ENCODE measurements at regions of chr18 and their contacts with region 1.

Region 1: DNA sequence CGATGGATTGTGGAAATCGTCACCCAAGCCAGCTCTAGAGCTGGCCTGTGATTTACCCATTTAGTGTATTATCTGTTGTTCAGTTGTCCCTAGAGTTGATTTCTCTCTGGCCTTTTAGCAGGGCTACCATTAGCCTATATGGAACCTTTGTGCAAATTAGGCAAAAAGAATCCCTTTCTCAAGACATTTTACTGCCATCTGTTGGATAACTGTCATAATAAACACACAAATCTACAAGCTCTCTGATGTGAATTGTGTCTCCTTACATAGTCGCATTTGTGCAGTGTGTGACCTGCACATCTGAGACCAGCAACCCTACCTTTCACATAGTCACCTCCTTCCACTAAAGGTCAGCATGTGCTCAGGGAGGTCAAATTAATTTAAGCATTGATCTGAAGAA is 34.0 kb downstream of the LOXHD1 start:
- DNase-seq: no peak
- ATAC-seq: no peak
- H3K4me3 ChIP-seq: no peak overlapping the region
- H3K27ac ChIP-seq: no peak overlapping the region
- H3K4me1 ChIP-seq: peaks cover 0 to 12% (median 6%) of the 10 kb centered on the region in 12 donors
- H3K27me3 ChIP-seq: peaks cover 0 to 13% (median 0%) of the 10 kb centered on the region in 9 donors
- CTCF ChIP-seq: peak in 5 of 12 donors; percentile 5 to 33 (median 22)
- POLR2A ChIP-seq: no peak

Region 2: DNA sequence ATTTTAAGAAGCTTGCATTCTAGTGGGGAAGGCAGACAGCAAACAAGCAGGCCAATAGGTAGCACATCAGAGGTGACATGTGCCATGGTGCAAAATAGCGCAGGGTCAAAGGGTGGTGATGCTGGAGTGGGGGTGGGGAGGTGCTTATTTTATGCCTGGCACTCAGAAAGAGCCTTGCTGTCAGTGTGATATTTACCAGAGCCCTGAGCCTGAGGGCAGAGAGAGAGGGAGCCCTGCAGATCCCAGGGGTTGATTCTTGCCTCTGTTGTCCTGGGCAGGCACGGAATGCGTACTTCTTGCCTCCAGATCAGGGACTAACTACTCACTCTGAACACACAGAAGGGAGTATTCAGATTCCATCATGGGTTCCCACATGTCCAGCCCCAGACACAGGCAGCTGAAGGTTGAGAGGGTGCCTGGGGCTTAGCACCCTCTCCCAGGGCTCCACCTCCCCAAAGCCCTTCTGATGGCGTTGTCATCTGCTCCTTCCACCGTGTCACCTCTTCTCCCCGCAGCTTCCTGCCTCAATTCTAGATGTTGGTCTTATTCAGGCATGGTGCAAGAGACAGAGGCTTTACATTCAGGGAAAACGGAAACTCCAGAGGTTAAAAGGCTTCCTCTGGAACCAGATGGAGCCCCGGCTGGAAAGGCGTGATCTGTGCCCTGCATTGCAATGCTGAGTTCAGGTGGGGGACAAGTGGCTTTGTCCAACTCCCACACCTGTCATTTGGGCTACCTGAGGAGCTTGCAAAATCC is 266.5 kb before region 1 on chr18:
- intact Hi-C with region 1: no loop called
- DNase-seq: peak in 4 of 5 donors; percentile 42 to 65 (median 54)
- ATAC-seq: peak; percentile 81 to 94 (median 88)
- H3K4me3 ChIP-seq: no peak overlapping the region
- H3K27ac ChIP-seq: peak overlapping the region in 8 of 12 donors; percentile 12 to 76 (median 53)
- H3K4me1 ChIP-seq: peaks cover 0 to 13% (median 7%) of the 10 kb centered on the region in 12 donors
- H3K27me3 ChIP-seq: no peaks in the 10 kb centered on the region
- CTCF ChIP-seq: no peak
- POLR2A ChIP-seq: no peak

Region 3: DNA sequence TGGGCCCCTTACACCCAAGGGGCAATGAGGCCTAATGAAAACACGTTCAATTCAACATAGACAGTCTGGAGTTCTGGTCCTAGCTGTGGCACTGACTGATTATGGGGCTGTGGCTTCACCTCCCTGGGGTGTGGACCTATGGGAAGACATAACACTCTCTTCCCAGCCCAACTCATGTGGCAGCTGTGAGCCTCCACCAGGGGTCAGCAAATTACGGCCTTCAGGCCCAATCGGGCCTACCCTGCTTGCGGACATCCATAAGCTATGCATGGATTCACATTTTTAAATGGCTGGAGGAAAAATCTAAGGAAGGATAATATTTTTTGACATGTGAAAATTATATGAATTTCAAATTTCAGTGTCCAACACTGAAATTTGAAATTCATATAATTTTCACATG is 67.3 kb before region 1 on chr18:
- intact Hi-C with region 1: loop called in 3 of 10 experiments (anchors 5 to 10 kb)
- DNase-seq: peak in 3 of 5 donors; percentile 27 to 55 (median 50)
- ATAC-seq: peak in 3 of 4 donors; percentile 73 to 86 (median 76)
- H3K4me3 ChIP-seq: no peak overlapping the region
- H3K27ac ChIP-seq: no peak overlapping the region
- H3K4me1 ChIP-seq: no peaks in the 10 kb centered on the region
- H3K27me3 ChIP-seq: no peaks in the 10 kb centered on the region
- CTCF ChIP-seq: peak; percentile 40 to 67 (median 58)
- POLR2A ChIP-seq: no peak

Region 4: GRCh38 chr18:46677611-46678010 is 54.6 kb after region 1 on chr18:
- intact Hi-C with region 1: no loop called
- DNase-seq: no peak
- ATAC-seq: peak in 3 of 4 donors; percentile 52 to 75 (median 70)
- H3K4me3 ChIP-seq: no peak overlapping the region
- H3K27ac ChIP-seq: no peak overlapping the region
- H3K4me1 ChIP-seq: peaks cover 0 to 11% (median 0%) of the 10 kb centered on the region in 12 donors
- H3K27me3 ChIP-seq: no peaks in the 10 kb centered on the region
- CTCF ChIP-seq: peak in 11 of 12 donors; percentile 12 to 53 (median 29)
- POLR2A ChIP-seq: no peak

Measured in heart left ventricle (tissue), 16 donors.